Activated CD4-positive, alpha-beta T cell treated with anti-CD3 and anti-CD28 coated beads, Interleukin-2, amount 10 ng/mL, durations not matched to agents 24 days and 14 days (primary cell): ENCODE measurements at regions of chr9 and their contacts with region 1.

Region 1: GRCh38 chr9:19230356-19231125 is at the start of gene DENND4C:
- DNase-seq: peak; percentile 96
- H3K4me3 Mint-ChIP-seq: no peak within 1 kb of the TSS
- H3K27ac Mint-ChIP-seq: peak within 1 kb of the TSS; percentile 85
- H3K4me1 Mint-ChIP-seq: peaks cover 5% of the 10 kb centered on the region
- H3K27me3 Mint-ChIP-seq: peaks cover 3% of the 10 kb centered on the region
- total RNA-seq, gene DENND4C: 13.6 and 16.8 TPM in 2 replicates

Region 2: GRCh38 chr9:19102631-19103345 is 127.8 kb before region 1 on chr9 and contains the start of gene HAUS6:
- intact Hi-C with region 1: loop called (anchors 1 kb)
- DNase-seq: peak; percentile 98
- H3K4me3 Mint-ChIP-seq: peak within 1 kb of the TSS; percentile 87
- H3K27ac Mint-ChIP-seq: peak within 1 kb of the TSS; percentile 93
- H3K4me1 Mint-ChIP-seq: peaks cover 19% of the 10 kb centered on the region
- H3K27me3 Mint-ChIP-seq: no peaks in the 10 kb centered on the region
- total RNA-seq, gene HAUS6: 32.2 and 34.3 TPM in 2 replicates

Region 3: DNA sequence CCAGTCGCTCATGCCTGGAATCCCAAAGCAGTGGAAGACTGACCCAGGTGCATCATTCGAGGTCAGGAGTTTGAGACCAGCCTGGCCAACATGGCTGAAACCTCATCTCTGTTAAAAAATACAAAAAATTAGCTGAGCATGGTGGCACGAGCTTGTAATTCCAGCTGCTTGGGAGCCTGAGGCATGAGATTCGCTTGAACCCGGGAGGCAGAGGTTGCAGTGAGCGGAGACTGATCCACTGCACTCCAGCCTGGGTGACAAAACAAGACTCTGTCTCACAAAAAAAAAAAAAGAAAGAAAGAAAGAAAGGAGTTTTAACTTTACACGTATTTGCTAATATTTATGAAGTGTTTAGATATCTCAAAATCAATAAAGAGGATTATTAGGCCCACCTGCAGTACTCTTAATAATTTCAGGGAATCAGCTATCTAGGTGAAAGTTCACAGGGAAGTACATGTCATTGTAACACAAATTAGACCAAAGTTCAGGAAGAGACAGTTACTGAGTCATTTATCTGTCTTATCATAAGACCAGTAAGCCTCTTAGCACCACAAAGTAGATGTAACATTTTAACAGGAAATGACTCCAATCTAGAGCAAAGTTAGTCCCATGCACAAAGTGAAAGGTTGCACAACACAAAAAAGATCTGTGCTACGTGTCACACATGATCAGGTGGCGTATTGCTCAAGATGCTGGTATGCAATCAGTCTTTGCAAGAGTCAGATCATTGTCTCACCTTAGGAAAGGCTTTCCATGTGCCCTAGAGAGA is 69.1 kb before region 1 on chr9:
- intact Hi-C with region 1: loop called (anchors 2 kb)
- DNase-seq: peak; percentile 86
- H3K4me3 Mint-ChIP-seq: peak overlapping the region; percentile 67
- H3K27ac Mint-ChIP-seq: peak overlapping the region; percentile 89
- H3K4me1 Mint-ChIP-seq: peaks cover 24% of the 10 kb centered on the region
- H3K27me3 Mint-ChIP-seq: no peaks in the 10 kb centered on the region

Region 4: DNA sequence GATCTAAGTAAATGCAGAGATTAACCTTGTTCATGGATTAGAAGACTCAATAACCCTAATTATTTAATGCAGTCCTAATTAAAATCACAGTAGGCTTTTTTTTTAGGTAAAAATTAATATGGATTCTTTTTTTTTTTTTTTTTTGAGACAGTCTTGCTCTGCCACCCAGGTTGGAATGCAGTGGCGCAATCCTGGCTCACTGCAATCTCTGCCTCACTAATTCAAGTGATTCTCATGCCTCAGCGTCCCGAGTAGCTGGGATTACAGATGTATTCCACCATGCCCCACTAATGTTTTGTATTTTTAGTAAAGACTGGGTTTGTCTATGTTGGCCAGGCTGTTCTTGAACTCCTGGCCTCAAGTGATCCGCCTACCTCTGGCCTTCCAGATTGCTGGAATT is 40.5 kb after region 1 on chr9:
- intact Hi-C with region 1: loop called (anchors 5 kb)
- DNase-seq: no peak
- H3K4me3 Mint-ChIP-seq: no peak overlapping the region
- H3K27ac Mint-ChIP-seq: no peak overlapping the region
- H3K4me1 Mint-ChIP-seq: peaks cover 22% of the 10 kb centered on the region
- H3K27me3 Mint-ChIP-seq: no peaks in the 10 kb centered on the region

Region 5: DNA sequence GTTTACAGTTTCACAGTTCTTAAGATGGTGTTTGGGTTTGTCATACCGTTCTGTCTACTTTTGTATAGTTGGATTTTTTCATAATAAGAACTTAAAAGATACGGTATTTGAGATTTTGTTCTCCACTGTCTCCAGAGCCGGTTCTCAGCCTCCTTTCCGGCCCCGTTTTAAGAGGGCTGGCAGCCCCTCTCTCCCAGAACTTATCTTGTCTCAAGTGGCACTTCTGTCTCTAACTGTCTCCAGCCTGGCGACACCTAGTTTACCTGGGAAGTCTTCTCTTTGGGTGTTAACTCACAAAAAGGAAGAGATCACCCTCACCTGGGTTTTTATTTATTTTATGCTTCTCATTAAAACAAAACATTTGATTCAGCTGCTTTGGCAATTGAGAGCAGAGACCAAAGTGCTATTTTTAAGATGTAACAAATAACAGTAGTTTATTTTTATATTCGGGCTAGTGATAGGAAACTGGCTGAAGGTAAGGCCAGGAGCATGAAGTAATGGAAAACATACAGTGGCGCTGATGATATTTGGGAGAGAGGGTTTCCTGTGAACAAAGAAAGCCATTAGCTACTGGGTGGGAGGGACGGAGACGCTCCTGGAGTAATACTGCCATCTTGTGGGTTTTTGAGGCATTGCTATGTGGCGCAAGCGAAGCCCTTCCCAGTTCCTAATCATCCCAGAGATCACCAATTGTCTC is 226.6 kb after region 1 on chr9:
- intact Hi-C with region 1: loop called (anchors 1 kb)
- DNase-seq: peak; percentile 91
- H3K4me3 Mint-ChIP-seq: peak overlapping the region; percentile 59
- H3K27ac Mint-ChIP-seq: no peak overlapping the region
- H3K4me1 Mint-ChIP-seq: peaks cover 10% of the 10 kb centered on the region
- H3K27me3 Mint-ChIP-seq: peaks cover 3% of the 10 kb centered on the region

Region 6: DNA sequence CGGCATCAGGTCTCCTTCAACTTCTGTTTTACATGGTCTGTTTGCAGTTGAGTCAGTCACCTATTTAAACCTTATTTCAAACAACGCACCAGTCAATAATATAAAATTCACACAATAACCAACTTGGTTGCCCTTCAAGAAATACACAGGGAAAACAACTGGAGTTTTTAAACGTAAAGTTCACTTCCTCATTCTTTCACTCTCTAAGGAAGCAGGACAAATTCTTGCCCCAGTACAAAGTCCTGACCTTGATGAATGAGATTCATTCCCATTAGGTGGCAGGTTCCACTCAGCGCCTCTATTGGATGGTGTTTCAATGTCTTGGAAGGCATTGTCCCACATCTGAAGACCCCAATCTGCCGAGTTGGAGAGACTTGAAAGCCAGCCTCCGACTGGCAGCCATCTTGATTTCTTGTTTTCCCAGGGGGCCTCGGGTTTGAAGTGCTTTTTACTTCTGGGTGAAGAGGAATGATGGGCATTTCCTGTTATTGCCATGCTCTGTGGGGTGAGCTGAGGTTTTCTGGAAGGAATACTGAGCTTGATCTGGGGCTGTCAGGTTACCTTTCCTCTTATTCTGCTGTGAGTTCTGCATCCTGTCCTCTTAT is 283.2 kb after region 1 on chr9:
- intact Hi-C with region 1: no loop called
- DNase-seq: no peak
- H3K4me3 Mint-ChIP-seq: no peak overlapping the region
- H3K27ac Mint-ChIP-seq: no peak overlapping the region
- H3K4me1 Mint-ChIP-seq: peaks cover 21% of the 10 kb centered on the region
- H3K27me3 Mint-ChIP-seq: peaks cover 2% of the 10 kb centered on the region